Left cardiac atrium (tissue), 4 donors: ENCODE measurements at regions of chr22 and their contacts with region 1.

Region 1: DNA sequence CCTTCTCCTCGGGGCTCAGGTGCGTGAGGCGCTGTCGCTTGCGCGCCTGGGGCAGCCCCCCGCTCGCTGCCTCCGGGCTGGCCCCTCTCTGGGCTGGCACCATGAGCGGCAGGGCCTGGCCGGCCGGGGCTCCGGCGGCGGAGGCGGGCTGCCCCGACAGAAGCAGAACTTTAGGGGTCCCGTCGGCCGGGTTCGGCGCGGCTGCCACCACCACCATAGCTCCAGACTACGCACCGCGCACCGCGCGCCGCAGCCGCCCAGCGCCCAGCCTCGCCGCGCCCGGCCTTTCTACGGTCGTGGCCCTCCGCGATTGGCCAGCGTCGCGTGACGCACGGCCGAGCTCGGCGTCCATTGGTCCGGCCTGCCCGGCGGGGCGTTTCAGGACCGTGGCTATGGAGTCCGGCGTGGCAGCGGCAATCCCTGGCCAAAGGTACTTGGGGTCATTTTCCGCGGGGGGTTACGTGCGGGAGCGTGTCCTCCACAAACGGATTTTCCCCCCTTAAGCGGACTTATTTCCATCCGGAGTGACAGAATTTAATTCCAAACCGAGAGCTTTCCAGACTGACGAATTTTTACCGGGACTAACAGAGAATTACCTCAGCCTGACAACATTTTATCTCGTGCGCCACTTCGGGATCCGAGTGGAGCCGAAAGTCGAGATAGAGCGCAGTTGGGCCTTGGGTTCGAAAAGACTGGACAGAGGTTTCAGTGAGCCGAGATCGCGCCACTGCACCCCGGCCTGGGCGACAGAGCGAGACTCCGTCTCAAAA is at the start of gene XBP1:
- DNase-seq: peak; percentile 97
- ATAC-seq: peak; percentile 97 to 98
- total RNA-seq, gene XBP1: 74.8 to 144 TPM

Region 2: GRCh38 chr22:27075028-27075678 is 1725.3 kb before region 1 on chr22:
- intact Hi-C with region 1: no loop called
- DNase-seq: no peak
- ATAC-seq: no peak

Region 3: DNA sequence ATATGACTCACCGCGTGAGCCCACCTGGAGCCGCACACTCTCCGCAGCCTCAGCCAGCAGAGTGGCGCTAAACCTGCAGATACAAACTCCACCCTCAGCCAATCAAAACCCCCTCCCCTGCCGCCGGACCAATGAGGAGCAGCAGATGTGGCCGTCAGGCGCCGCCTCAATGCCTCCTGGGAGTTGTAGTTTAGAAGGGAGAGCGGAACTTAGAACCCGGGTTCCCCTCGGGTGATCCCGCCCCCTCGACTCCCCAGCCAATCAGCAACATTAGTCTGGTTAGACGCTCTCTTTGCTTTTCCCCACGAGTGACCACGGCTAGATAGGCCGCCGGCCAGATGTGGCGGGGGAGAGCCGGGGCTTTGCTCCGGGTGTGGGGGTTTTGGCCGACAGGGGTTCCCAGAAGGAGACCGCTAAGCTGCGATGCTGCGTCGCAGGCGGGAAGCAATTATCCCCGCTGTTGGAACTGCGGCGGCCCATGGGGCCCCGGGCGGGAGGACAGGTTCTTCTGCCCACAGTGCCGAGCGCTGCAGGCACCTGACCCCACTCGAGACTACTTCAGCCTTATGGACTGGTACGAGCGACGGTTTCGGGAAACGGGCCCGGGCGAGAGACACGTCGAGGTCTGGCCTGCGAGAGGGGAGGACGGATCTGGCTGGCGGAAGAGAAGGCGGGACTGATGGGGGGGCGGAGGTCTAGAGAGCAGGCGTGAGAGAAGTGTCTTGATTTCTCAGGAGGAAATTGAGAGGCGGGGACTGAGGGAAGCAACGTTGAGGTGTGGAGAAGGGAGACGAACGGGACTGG is 58.5 kb before region 1 on chr22 and contains the starts of genes CHEK2 and HSCB:
- intact Hi-C with region 1: loop called in 1 of 2 experiments (anchors 5 kb)
- DNase-seq: peak; percentile 99
- ATAC-seq: peak; percentile 98 to 99
- total RNA-seq, gene CHEK2: 2.9 to 3.5 TPM
- total RNA-seq, gene HSCB: 9.3 to 10.5 TPM

Region 4: DNA sequence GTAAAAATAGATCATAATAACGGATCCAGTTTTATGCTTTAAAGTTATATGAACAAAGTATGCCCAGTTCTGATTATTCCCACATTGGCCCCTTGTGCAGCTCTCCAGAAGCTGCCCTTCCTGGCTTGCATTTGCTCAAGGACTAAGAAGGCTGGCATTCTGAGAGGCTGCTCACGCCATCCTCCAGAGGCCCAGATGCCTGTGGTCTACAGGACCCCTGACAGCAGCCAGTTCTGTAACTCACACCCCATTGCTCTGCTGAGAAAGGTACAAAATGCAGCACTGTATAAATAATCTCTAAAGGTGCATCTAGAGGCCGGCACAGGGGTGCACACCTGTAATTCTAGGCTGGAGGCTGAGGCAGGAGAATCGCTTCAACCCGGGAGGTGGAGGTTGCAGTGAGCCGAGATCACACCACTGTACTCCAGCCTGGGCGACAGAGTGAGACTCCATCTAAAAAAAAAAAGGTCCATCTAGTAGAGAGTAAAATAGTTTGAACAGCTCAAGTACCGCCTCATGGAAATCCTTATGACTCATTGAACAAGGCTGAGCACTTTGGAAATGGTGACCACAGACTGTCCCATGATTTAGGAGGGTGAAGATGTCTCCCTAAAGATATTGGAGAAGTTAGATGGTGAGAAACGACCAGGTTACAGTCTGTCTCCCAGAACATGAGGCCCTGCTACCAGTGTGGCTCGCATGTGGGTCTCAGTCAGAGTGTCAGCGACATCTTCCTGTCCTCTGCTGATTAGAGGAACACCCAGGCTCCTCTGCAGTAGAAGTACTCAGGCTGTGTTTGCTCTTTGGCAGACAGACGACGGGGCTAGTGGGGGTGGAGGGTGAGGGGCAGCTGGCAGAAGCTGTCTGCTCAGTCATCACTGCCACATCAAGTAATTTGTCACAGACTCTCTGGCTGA is 328.7 kb after region 1 on chr22:
- intact Hi-C with region 1: no loop called
- DNase-seq: peak; percentile 49
- ATAC-seq: peak; percentile 95 to 96